B cell (primary cell): ENCODE measurements at regions of chr17 and their contacts with region 1.

Region 1: GRCh38 chr17:75393523-75394331 is 11.8 kb downstream of the GRB2 start:
- DNase-seq: peak; percentile 94
- ATAC-seq: peak; percentile 95
- H3K4me3 ChIP-seq: peak overlapping the region; percentile 49 to 78 (median 63)
- H3K4me3 Mint-ChIP-seq: peak overlapping the region; percentile 86
- H3K27ac ChIP-seq: peak overlapping the region; percentile 17 to 79
- H3K27ac Mint-ChIP-seq: peak overlapping the region; percentile 79
- H3K4me1 ChIP-seq: peaks cover 68 to 76% of the 10 kb centered on the region in 2 donors
- H3K4me1 Mint-ChIP-seq: peaks cover 81% of the 10 kb centered on the region
- H3K27me3 ChIP-seq: no peaks in the 10 kb centered on the region
- H3K27me3 Mint-ChIP-seq: no peaks in the 10 kb centered on the region
- CTCF ChIP-seq: peak; percentile 12

Region 2: GRCh38 chr17:75319904-75320691 is 73.6 kb before region 1 on chr17:
- CTCF ChIA-PET with region 1: interaction called, 56 read pairs
- POLR2A ChIA-PET with region 1: interaction called, 9 read pairs
- intact Hi-C with region 1: no loop called
- DNase-seq: peak; percentile 57
- ATAC-seq: peak; percentile 59
- H3K4me3 ChIP-seq: no peak overlapping the region
- H3K4me3 Mint-ChIP-seq: peak overlapping the region; percentile 77
- H3K27ac ChIP-seq: peak overlapping the region; percentile 71 to 81
- H3K27ac Mint-ChIP-seq: peak overlapping the region; percentile 92
- H3K4me1 ChIP-seq: peaks cover 39 to 73% of the 10 kb centered on the region in 2 donors
- H3K4me1 Mint-ChIP-seq: peaks cover 64% of the 10 kb centered on the region
- H3K27me3 ChIP-seq: no peaks in the 10 kb centered on the region
- H3K27me3 Mint-ChIP-seq: no peaks in the 10 kb centered on the region
- CTCF ChIP-seq: no peak

Region 3: GRCh38 chr17:75352079-75352569 is 41.6 kb before region 1 on chr17:
- CTCF ChIA-PET with region 1: interaction called, 14 read pairs
- POLR2A ChIA-PET with region 1: interaction called, 11 read pairs
- intact Hi-C with region 1: no loop called
- DNase-seq: no peak
- ATAC-seq: no peak
- H3K4me3 ChIP-seq: no peak overlapping the region
- H3K4me3 Mint-ChIP-seq: peak overlapping the region; percentile 63
- H3K27ac ChIP-seq: peak overlapping the region; percentile 25 to 76
- H3K27ac Mint-ChIP-seq: peak overlapping the region; percentile 90
- H3K4me1 ChIP-seq: peaks cover 74 to 85% of the 10 kb centered on the region in 2 donors
- H3K4me1 Mint-ChIP-seq: peaks cover 80% of the 10 kb centered on the region
- H3K27me3 ChIP-seq: no peaks in the 10 kb centered on the region
- H3K27me3 Mint-ChIP-seq: no peaks in the 10 kb centered on the region
- CTCF ChIP-seq: no peak

Region 4: DNA sequence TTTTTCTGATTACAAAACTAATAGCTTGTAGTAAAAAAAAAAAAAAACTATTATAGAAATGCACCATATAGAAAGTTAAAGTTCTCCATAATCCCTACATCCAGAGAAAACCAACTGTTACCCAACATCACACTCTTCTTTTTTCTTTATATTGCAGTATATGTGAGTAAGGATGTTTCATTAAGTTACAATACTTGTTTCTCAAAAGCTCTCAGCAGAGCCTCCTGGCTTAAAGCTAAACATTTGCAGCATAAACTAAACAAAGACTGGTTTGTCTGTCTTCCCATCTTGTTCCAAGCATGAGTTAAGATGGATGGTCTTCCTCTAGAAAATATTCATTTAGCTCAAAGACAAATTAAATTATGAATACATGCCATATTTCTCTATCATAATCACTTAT is 13.4 kb before region 1 on chr17:
- CTCF ChIA-PET with region 1: interaction called, 18 read pairs
- POLR2A ChIA-PET with region 1: interaction called, 4 read pairs
- intact Hi-C with region 1: loop called (anchors 2 kb)
- DNase-seq: no peak
- ATAC-seq: no peak
- H3K4me3 ChIP-seq: no peak overlapping the region
- H3K4me3 Mint-ChIP-seq: no peak overlapping the region
- H3K27ac ChIP-seq: peak overlapping the region in 1 of 2 donors; percentile 68
- H3K27ac Mint-ChIP-seq: no peak overlapping the region
- H3K4me1 ChIP-seq: peaks cover 54 to 56% of the 10 kb centered on the region in 2 donors
- H3K4me1 Mint-ChIP-seq: peaks cover 65% of the 10 kb centered on the region
- H3K27me3 ChIP-seq: no peaks in the 10 kb centered on the region
- H3K27me3 Mint-ChIP-seq: no peaks in the 10 kb centered on the region
- CTCF ChIP-seq: no peak

Region 5: DNA sequence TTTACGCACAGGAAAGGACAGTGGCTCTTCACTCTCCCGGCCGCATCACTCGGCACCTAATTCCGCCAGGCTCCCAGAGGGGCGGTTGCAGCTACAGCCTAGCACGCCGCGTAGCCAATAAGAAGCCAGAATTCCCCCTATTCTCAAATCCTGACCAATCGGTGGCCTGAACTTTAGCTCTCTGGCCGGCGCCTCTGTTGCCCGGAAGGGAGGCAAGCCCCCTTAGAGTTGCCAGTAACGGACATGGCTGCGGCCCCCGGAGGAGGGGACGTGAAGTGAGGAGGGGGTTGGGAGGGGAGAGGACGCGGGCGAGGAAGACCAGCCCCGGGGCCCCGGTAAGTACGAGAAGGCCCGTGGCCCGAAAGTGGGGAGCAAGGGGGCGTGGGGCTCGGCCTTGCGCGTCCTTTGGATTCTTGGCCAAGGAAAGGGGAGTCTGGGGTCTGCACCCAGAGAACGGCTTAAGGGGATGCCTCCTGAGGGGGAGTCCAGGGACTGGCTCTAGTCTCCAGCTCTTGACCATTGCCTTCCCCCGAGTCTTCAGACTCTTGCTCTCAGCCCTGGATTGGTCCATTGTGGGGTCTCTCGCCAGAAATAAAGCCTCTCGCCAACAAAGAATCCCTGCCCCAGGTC is 62.8 kb after region 1 on chr17 and contains the start of gene TMEM94:
- CTCF ChIA-PET with region 1: no interaction called
- POLR2A ChIA-PET with region 1: no interaction called
- intact Hi-C with region 1: loop called (anchors 2 kb)
- DNase-seq: peak; percentile 97
- ATAC-seq: peak; percentile 98
- H3K4me3 ChIP-seq: peak within 1 kb of the TSS; percentile 75 to 99 (median 84)
- H3K4me3 Mint-ChIP-seq: peak within 1 kb of the TSS; percentile 96
- H3K27ac ChIP-seq: peak within 1 kb of the TSS; percentile 60 to 79
- H3K27ac Mint-ChIP-seq: peak within 1 kb of the TSS; percentile 88
- H3K4me1 ChIP-seq: peaks cover 14 to 20% of the 10 kb centered on the region in 2 donors
- H3K4me1 Mint-ChIP-seq: peaks cover 42% of the 10 kb centered on the region
- H3K27me3 ChIP-seq: no peaks in the 10 kb centered on the region
- H3K27me3 Mint-ChIP-seq: no peaks in the 10 kb centered on the region
- CTCF ChIP-seq: no peak
- total RNA-seq, gene TMEM94: 112 and 139 TPM in 2 replicates